Calu3 (cell line): ENCODE measurements at regions of chr5 and their contacts with region 1.

Region 1: GRCh38 chr5:39376293-39376714 is 12.0 kb upstream of the C9 start:
- DNase-seq: peak; percentile 64
- H3K4me3 Mint-ChIP-seq: no peak overlapping the region
- H3K27ac Mint-ChIP-seq: no peak overlapping the region
- H3K4me1 Mint-ChIP-seq: peaks cover 39% of the 10 kb centered on the region
- H3K27me3 Mint-ChIP-seq: no peaks in the 10 kb centered on the region
- CTCF ChIP-seq: peak; percentile 73

Region 2: GRCh38 chr5:39547553-39548154 is 171.3 kb after region 1 on chr5:
- CTCF ChIA-PET with region 1: interaction called, 69 read pairs
- intact Hi-C with region 1: loop called (anchors 1 kb)
- DNase-seq: peak; percentile 49
- H3K4me3 Mint-ChIP-seq: no peak overlapping the region
- H3K27ac Mint-ChIP-seq: no peak overlapping the region
- H3K4me1 Mint-ChIP-seq: peaks cover 10% of the 10 kb centered on the region
- H3K27me3 Mint-ChIP-seq: no peaks in the 10 kb centered on the region
- CTCF ChIP-seq: peak; percentile 59

Region 3: DNA sequence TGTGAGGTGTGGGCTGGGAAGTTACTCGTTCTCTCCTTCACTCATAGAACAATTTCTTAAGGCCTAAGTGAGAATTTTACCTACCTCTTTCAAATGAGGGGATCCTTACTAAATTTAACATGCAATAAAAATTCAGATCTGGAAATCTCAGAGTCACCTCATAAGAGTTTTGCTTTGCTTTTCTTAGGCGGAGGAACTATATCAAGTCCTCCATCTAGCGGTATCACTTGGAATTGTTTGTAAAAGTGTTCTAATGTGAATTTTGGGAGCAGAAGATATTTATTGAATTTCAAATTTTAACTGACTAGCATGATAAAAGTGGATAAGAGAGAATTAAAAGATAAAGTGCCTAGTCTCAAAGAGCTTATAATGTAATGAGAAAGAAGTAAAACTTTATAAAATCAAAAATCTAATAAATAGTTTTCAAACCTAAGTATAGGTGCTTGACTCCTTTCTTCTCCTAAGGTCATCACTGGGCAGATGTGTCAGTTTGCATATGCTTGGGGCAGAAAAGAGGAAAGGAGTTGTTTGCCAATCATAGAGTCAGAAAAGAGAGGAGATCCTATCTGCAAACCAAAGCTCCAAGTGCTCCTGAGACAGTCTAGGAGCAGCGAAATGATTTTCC is 194.2 kb after region 1 on chr5:
- CTCF ChIA-PET with region 1: interaction called, 7 read pairs
- intact Hi-C with region 1: loop called (anchors 1 kb)
- DNase-seq: peak; percentile 10
- H3K4me3 Mint-ChIP-seq: no peak overlapping the region
- H3K27ac Mint-ChIP-seq: no peak overlapping the region
- H3K4me1 Mint-ChIP-seq: no peaks in the 10 kb centered on the region
- H3K27me3 Mint-ChIP-seq: no peaks in the 10 kb centered on the region
- CTCF ChIP-seq: peak; percentile 16